Left colon (tissue), 2 donors: ENCODE measurements at regions of chr5 and their contacts with region 1.

Region 1: GRCh38 chr5:168734620-168735300 is 155.6 kb upstream of the PANK3 start:
- DNase-seq: no peak
- ATAC-seq: no peak

Region 2: DNA sequence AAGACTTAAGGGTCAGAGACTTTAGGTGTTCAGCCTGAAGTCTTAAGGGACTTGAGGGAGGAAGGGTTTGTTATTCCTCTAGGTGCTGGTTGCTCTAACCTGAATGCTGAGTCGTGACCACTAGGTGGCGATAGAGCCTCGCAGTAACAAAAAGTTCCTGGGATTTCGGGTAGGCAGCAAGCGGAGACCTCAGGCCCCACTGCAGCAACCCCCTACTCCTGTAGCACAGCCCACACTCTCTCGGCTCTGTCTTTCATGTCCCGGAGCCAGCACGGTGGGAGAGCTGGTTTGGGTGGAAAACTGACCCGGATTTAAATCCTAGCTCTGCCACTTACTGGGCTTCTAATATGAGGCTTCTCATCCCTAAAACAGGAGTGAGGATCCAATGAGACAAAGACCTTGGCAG is 55.2 kb before region 1 on chr5:
- intact Hi-C with region 1: no loop called
- DNase-seq: peak; percentile 57 to 85
- ATAC-seq: peak; percentile 51

Region 3: GRCh38 chr5:169650701-169651331 is 916.1 kb after region 1 on chr5:
- intact Hi-C with region 1: no loop called
- DNase-seq: no peak
- ATAC-seq: no peak

Region 4: GRCh38 chr5:170235876-170236864 is 1501.4 kb after region 1 on chr5:
- intact Hi-C with region 1: loop called in 1 of 2 experiments (anchors 10 kb)
- DNase-seq: no peak
- ATAC-seq: no peak